Common myeloid progenitor, CD34-positive (primary cell): ENCODE measurements at regions of chr15 and their contacts with region 1.

Region 1: DNA sequence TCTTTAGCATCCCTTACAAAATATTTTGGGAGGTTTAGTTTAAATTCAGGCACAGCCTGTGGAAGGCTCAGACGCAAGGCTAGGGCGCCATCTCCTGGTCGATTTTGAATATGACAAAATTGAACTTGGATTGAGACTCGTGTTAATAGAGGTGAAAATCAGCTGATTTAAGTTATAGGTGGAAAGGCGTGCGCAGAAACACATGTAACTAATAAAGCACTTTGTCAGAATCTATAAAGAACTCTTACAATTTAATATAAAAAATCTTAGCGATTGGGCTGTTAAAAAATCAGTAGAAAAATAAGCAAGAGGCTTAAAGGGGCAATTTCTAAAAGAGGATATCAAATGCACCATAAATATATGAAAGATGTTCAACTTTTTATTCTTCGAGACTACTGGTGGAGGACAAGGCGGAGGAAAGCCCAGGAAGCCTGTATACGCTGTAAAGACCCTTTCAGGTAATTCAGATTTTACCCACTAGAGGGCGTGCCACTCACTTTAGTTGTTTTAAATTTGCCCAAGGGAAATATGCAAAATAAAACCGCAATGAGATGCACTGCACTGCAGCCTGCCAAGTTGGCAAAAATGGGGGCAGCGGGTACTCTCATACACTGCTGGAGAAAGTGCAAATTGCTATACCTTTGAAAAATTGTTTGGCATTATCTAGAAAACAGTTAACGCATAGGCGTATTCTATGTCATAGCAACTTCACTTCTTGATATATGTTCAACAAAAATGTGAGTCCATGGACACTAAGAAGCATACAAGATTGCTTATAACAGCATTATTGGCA is 64.7 kb downstream of the SLC30A4 start:
- DNase-seq: peak; percentile 86 to 94 (median 91)
- H3K4me3 ChIP-seq: peak overlapping the region in 6 of 7 experiments; percentile 58 to 86 (median 72)
- H3K27ac ChIP-seq: peak overlapping the region; percentile 41 to 84
- H3K4me1 ChIP-seq: peaks cover 12 to 46% (median 43%) of the 10 kb centered on the region in 4 experiments
- H3K27me3 ChIP-seq: no peaks in the 10 kb centered on the region

Region 2: DNA sequence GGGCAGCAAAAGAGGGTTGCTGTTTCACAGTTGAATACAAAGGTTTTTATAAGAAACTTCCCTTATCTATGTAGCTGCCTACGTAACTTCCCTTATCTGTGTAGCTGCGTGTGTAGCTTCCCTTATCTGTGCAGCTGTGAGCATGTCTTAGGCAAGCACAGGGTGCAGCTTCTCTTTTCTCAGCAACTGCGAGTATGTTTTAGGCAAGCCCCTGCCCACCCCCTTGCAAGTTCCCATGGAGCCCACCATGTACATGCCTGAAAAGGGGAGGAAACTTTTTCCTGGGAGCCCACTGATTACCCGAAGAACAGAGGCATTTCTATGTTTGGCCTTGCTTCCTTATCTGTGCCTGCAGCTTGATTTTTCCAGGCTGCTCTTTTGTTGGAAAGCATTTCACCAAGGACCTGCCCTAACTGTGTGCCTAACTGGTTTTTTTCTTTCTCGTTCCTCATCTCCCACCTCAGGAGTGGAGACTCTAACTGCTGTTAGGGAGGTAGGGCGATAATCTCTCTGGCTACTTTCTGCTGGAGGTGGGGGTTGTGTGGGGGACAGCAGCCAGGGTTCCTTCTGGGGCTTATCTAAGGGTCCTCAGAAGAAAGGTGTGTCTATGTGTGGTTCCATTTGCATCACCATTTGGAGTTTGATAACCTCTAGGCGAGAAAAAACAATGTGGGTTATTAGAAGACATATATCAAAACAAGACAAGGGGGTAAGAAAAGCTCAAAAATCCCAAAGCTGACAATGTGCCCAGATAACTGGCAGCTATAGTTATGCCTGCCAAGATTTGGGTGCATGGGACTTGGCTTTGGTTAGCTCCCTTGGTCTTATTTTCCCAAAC is 408.8 kb before region 1 on chr15:
- CTCF ChIA-PET with region 1: no interaction called
- POLR2A ChIA-PET with region 1: no interaction called
- DNase-seq: peak; percentile 82 to 95 (median 90)
- H3K4me3 ChIP-seq: peak overlapping the region in 2 of 7 experiments; percentile 16 to 33
- H3K27ac ChIP-seq: peak overlapping the region; percentile 44 to 85
- H3K4me1 ChIP-seq: peaks cover 0 to 23% (median 5%) of the 10 kb centered on the region in 4 experiments
- H3K27me3 ChIP-seq: no peaks in the 10 kb centered on the region

Region 3: GRCh38 chr15:45414215-45414885 is 43.5 kb before region 1 on chr15:
- CTCF ChIA-PET with region 1: interaction called, 10 read pairs
- POLR2A ChIA-PET with region 1: no interaction called
- DNase-seq: peak in 2 of 3 donors; percentile 22 to 37
- H3K4me3 ChIP-seq: no peak overlapping the region
- H3K27ac ChIP-seq: no peak overlapping the region
- H3K4me1 ChIP-seq: peaks cover 0 to 13% (median 8%) of the 10 kb centered on the region in 4 experiments
- H3K27me3 ChIP-seq: no peaks in the 10 kb centered on the region

Region 4: DNA sequence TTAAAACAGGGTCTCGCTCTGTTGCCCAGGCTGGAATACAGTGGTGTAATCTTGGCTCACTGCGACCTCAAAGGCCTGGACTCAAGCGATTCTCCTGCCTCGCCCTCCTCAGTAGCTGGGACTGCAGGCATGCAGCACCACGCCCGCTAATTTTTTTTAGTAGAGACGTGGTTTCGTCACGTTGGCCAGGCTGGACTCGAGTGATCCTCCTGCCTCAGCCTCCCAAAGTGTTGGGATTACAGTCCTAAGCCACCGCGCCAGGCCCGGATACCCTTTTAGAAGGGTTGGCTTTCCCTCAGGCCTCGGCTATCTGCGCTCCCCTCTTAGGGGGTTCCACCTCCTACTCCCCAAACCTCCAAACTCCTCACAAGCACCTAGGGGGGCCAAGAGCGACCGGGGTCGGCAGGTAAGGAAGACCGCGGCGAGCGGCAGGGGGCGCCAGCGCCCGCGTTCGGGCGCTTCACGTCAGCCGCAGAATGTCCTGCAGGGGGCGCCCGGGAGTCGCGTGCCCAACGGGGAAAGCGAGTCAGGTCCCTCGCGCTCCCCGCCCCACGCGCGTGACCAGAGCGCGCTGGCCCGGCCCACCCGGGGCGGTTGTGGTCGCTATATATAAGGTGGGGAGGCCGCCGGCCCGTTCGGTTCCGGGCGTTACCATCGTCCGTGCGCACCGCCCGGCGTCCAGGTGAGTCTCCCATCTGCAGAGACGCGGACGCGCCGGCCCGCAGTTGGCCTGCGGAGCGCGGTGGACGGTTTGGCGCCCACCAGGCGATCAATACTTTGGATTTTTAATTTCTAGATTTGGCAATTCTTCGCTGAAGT is 27.7 kb before region 1 on chr15:
- CTCF ChIA-PET with region 1: interaction called, 123 read pairs
- POLR2A ChIA-PET with region 1: interaction called, 4 read pairs
- DNase-seq: peak; percentile 71 to 75 (median 72)
- H3K4me3 ChIP-seq: peak overlapping the region in 6 of 7 experiments; percentile 40 to 71 (median 57)
- H3K27ac ChIP-seq: no peak overlapping the region
- H3K4me1 ChIP-seq: peaks cover 0 to 5% (median 2%) of the 10 kb centered on the region in 4 experiments
- H3K27me3 ChIP-seq: peaks cover 0 to 12% (median 3%) of the 10 kb centered on the region in 5 experiments

Region 5: GRCh38 chr15:45439521-45440260 is 18.1 kb before region 1 on chr15:
- CTCF ChIA-PET with region 1: interaction called, 28 read pairs
- POLR2A ChIA-PET with region 1: interaction called, 4 read pairs
- DNase-seq: no peak
- H3K4me3 ChIP-seq: no peak overlapping the region
- H3K27ac ChIP-seq: no peak overlapping the region
- H3K4me1 ChIP-seq: peaks cover 0 to 2% (median 0%) of the 10 kb centered on the region in 4 experiments
- H3K27me3 ChIP-seq: no peaks in the 10 kb centered on the region

Region 6: DNA sequence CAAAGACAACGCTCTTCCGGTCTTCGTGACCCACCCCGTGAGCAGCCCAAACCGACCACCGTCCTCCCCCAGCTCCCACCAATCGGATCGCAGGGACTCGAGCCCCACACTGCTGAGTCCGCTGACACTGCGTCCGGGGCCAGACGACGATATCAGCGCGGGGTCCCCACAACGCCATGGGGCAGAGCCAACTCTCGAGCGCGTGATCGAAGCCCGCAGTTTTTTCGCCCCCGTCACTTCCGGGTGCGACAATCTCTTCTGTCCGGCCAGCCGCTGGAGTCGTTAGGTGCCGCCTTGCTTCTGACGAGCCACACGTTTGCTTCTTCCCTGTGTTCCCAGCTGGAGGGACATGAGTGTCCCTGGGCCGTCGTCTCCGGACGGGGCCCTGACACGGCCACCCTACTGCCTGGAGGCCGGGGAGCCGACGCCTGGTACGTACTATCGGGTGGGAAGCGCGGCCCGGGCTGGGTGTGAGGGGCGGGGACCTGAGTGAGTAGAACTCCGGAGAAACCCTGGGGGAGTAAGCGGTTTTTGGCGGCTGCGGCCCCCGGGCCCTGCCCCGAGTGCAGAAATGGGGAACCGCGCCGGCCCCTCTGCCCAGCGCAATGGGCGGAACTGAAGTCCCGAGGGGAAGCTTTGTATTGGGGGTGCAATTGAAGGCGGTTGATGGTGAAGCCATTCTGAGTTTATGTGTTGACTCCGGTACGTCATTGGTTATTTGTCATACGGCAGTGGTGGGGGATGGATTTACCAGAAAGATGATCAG is 129.4 kb after region 1 on chr15 and contains the start of gene BLOC1S6:
- CTCF ChIA-PET with region 1: interaction called, 12 read pairs
- POLR2A ChIA-PET with region 1: no interaction called
- DNase-seq: peak; percentile 97 to 99 (median 98)
- H3K4me3 ChIP-seq: peak within 1 kb of the TSS; percentile 46 to 100 (median 88)
- H3K27ac ChIP-seq: peak within 1 kb of the TSS; percentile 93 to 98
- H3K4me1 ChIP-seq: peaks cover 17 to 40% (median 26%) of the 10 kb centered on the region in 4 experiments
- H3K27me3 ChIP-seq: peaks cover 0 to 6% (median 0%) of the 10 kb centered on the region in 5 experiments

Region 7: DNA sequence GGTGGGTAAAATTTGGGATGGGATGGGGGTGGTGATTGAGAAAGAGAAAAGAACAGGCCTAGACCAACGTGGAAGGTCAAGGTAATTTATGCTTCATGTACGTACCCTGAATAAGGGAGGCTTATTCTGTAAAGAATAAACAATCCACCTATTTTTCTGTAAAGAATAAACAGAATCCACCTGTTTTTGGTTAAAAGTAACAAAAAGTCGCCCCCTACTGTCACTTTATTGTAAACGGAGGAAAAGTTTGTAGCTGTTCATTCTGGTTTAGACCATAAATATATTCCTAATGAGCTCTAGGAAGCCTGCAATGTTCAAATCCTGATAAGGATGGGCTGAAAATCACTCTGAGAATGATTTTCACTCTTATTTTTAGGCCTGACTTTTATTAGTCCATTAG is 153.5 kb after region 1 on chr15:
- CTCF ChIA-PET with region 1: interaction called, 76 read pairs
- POLR2A ChIA-PET with region 1: no interaction called
- DNase-seq: peak in 2 of 3 donors; percentile 42 to 56
- H3K4me3 ChIP-seq: no peak overlapping the region
- H3K27ac ChIP-seq: no peak overlapping the region
- H3K4me1 ChIP-seq: no peaks in the 10 kb centered on the region
- H3K27me3 ChIP-seq: no peaks in the 10 kb centered on the region

Region 8: GRCh38 chr15:45616901-45617323 is 159.1 kb after region 1 on chr15:
- CTCF ChIA-PET with region 1: interaction called, 76 read pairs
- POLR2A ChIA-PET with region 1: no interaction called
- DNase-seq: no peak
- H3K4me3 ChIP-seq: no peak overlapping the region
- H3K27ac ChIP-seq: no peak overlapping the region
- H3K4me1 ChIP-seq: no peaks in the 10 kb centered on the region
- H3K27me3 ChIP-seq: no peaks in the 10 kb centered on the region